ENCODE measurements at regions of chr3 and their contacts with region 1.

Region 1: GRCh38 chr3:45499529-45499928 is 95.0 kb upstream of the LIMD1 start:
- DNase-seq: no peak
- H3K4me3 ChIP-seq: no peak overlapping the region
- H3K27ac ChIP-seq: no peak overlapping the region
- H3K4me1 ChIP-seq: peaks cover 0 to 25% (median 8%) of the 10 kb centered on the region in 4 donors
- H3K27me3 ChIP-seq: no peaks in the 10 kb centered on the region
- CTCF ChIP-seq: peak; percentile 41 to 47

Region 2: GRCh38 chr3:45037734-45038455 is 461.6 kb before region 1 on chr3:
- intact Hi-C with region 1: loop called (anchors 5 kb)
- DNase-seq: peak; percentile 95 to 97
- H3K4me3 ChIP-seq: no peak overlapping the region
- H3K27ac ChIP-seq: peak overlapping the region in 1 of 2 donors; percentile 72
- H3K4me1 ChIP-seq: peaks cover 0 to 37% (median 19%) of the 10 kb centered on the region in 4 donors
- H3K27me3 ChIP-seq: no peaks in the 10 kb centered on the region
- CTCF ChIP-seq: peak; percentile 87 to 95

Region 3: GRCh38 chr3:45297331-45297730 is 202.2 kb before region 1 on chr3:
- intact Hi-C with region 1: no loop called
- DNase-seq: no peak
- H3K4me3 ChIP-seq: no peak overlapping the region
- H3K27ac ChIP-seq: no peak overlapping the region
- H3K4me1 ChIP-seq: no peaks in the 10 kb centered on the region
- H3K27me3 ChIP-seq: peaks cover 0 to 4% of the 10 kb centered on the region in 2 donors
- CTCF ChIP-seq: no peak

Region 4: DNA sequence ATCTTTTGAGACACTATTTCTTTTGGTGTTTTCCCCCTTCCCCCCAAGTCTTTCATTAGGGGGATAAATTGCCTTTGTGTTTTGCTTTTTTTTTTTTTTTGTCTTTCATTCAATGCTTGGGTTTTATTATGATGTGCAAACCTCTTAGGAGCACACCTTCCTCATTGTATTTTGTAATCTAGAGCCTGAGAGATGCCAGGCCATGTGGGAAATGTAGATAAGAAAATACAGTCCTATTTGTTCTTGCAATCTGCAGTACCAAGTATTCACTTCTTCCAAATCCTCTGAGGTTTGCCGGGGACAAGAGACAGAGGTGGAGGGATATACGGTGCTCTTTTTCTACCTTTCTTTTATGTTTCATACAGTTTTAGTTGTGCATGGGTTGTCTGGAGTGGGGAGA is 44.5 kb before region 1 on chr3:
- intact Hi-C with region 1: no loop called
- DNase-seq: no peak
- H3K4me3 ChIP-seq: no peak overlapping the region
- H3K27ac ChIP-seq: no peak overlapping the region
- H3K4me1 ChIP-seq: no peaks in the 10 kb centered on the region
- H3K27me3 ChIP-seq: no peaks in the 10 kb centered on the region
- CTCF ChIP-seq: no peak

Region 5: DNA sequence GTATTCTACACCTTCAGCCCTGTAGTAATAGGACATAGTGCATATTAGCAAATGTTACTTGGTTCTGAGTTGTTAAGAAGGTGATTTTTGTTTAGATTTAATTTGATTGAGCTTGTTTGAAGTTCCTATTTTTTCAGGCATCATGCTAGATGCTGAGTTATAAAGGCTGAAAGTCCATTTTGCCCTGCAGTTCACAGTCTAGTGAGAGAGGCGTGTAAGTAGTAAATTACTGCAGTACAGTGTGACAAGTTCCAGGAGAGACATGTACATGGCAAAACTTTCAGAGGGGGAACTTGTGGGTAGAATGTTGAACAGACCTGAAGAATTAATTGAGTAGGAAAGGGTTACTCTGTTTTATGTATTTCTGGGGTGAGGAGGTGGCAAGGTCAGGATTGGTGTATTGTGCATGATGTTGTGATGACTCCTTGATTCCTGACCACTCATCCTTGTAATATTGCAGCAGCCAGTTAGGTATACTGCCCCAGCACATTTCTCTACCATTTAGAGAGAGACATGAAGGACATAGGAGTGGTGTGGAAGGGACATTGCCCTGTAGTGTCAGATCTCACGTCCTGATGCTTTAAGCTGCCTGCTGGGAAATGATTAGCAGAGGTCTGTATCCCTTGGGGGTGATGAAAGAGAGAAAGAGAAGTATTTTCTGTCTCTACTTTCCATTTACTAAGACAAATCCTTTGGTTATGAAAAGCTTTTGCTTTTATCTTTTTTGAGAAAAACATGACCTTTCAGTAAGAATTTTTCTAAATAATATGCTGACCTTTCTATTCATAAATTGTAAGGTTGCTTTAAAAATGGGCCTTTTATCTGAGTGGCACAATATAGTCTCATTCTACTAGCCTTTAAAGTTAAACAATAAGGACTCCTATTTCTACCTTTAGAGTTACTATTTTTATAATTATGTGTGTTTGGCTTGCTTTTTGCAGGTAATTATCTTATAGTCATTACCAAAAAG is 206.6 kb after region 1 on chr3:
- intact Hi-C with region 1: no loop called
- DNase-seq: no peak
- H3K4me3 ChIP-seq: no peak overlapping the region
- H3K27ac ChIP-seq: no peak overlapping the region
- H3K4me1 ChIP-seq: peaks cover 0 to 7% (median 0%) of the 10 kb centered on the region in 4 donors
- H3K27me3 ChIP-seq: no peaks in the 10 kb centered on the region
- CTCF ChIP-seq: no peak

Measured in tibial artery (tissue), 4 donors.